ENCODE measurements at regions of chr19 and their contacts with region 1.

Region 1: GRCh38 chr19:55624109-55625003 is at the start of gene ZNF784:
- DNase-seq: peak; percentile 87 to 95
- H3K4me3 ChIP-seq: peak within 1 kb of the TSS; percentile 48
- H3K4me1 ChIP-seq: no peaks in the 10 kb centered on the region
- H3K27me3 ChIP-seq: no peaks in the 10 kb centered on the region; the same call in 1 of the 2 replicates

Region 2: GRCh38 chr19:55516878-55517620 is 107.3 kb before region 1 on chr19:
- in situ Hi-C with region 1: loop called (anchors 5 kb)
- DNase-seq: peak; percentile 82 to 93
- H3K4me3 ChIP-seq: peak overlapping the region; percentile 23
- H3K4me1 ChIP-seq: peaks cover 3% of the 10 kb centered on the region; the same call in 1 of the 2 replicates
- H3K27me3 ChIP-seq: no peaks in the 10 kb centered on the region; the same call in 1 of the 2 replicates

Region 3: GRCh38 chr19:55795021-55795420 is 170.7 kb after region 1 on chr19:
- in situ Hi-C with region 1: no loop called
- DNase-seq: no peak
- H3K4me3 ChIP-seq: no peak overlapping the region
- H3K4me1 ChIP-seq: no peaks in the 10 kb centered on the region
- H3K27me3 ChIP-seq: no peaks in the 10 kb centered on the region

Region 4: GRCh38 chr19:55820037-55820436 is 195.7 kb after region 1 on chr19:
- in situ Hi-C with region 1: no loop called
- DNase-seq: no peak
- H3K4me3 ChIP-seq: no peak overlapping the region
- H3K4me1 ChIP-seq: no peaks in the 10 kb centered on the region
- H3K27me3 ChIP-seq: no peaks in the 10 kb centered on the region

Measured in HAP-1 (cell line).